ENCODE measurements at regions of chr6 and their contacts with region 1.

Region 1: DNA sequence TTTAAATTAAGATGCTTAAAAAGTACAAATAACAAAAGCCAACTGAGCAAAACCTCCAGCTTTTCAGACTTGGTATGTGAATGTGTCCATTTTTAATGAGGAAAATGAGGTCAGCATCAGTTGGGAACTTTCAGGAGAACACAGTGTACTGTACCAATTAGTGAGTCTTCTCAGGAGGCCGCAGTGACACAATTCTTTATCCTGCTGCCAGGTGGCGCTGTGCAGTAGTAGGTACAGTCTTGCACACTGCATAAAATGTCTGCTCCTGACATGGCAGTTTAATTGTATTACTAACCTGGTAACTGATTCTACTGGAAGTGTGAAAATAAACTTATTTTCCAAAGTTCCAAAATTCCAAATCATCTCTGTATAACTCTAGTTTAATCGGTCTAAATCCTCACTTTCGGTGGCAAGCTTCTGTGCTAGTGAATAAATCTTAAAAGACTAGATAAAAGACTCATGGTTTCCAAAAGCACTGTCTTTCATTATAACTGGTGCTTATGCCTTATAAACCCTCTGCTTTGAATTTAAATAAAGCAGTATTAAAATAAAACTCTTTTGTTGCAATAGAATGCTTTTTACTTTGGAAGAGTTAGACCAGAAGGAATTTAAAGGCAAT is 214.8 kb upstream of the MMS22L start:
- H3K4me3 Mint-ChIP-seq: no peak overlapping the region
- H3K27ac Mint-ChIP-seq: no peak overlapping the region
- H3K4me1 Mint-ChIP-seq: no peaks in the 10 kb centered on the region
- H3K27me3 Mint-ChIP-seq: peaks cover 5% of the 10 kb centered on the region

Region 2: GRCh38 chr6:97195117-97195516 is 302.7 kb before region 1 on chr6:
- intact Hi-C with region 1: loop called (anchors 10 kb)
- H3K4me3 Mint-ChIP-seq: no peak overlapping the region
- H3K27ac Mint-ChIP-seq: no peak overlapping the region
- H3K4me1 Mint-ChIP-seq: no peaks in the 10 kb centered on the region
- H3K27me3 Mint-ChIP-seq: no peaks in the 10 kb centered on the region

Region 3: GRCh38 chr6:97557355-97557754 is 59.5 kb after region 1 on chr6:
- intact Hi-C with region 1: no loop called
- H3K4me3 Mint-ChIP-seq: no peak overlapping the region
- H3K27ac Mint-ChIP-seq: no peak overlapping the region
- H3K4me1 Mint-ChIP-seq: no peaks in the 10 kb centered on the region
- H3K27me3 Mint-ChIP-seq: no peaks in the 10 kb centered on the region

Region 4: GRCh38 chr6:97572943-97573342 is 75.1 kb after region 1 on chr6:
- intact Hi-C with region 1: no loop called
- H3K4me3 Mint-ChIP-seq: no peak overlapping the region
- H3K27ac Mint-ChIP-seq: no peak overlapping the region
- H3K4me1 Mint-ChIP-seq: no peaks in the 10 kb centered on the region
- H3K27me3 Mint-ChIP-seq: no peaks in the 10 kb centered on the region

Region 5: DNA sequence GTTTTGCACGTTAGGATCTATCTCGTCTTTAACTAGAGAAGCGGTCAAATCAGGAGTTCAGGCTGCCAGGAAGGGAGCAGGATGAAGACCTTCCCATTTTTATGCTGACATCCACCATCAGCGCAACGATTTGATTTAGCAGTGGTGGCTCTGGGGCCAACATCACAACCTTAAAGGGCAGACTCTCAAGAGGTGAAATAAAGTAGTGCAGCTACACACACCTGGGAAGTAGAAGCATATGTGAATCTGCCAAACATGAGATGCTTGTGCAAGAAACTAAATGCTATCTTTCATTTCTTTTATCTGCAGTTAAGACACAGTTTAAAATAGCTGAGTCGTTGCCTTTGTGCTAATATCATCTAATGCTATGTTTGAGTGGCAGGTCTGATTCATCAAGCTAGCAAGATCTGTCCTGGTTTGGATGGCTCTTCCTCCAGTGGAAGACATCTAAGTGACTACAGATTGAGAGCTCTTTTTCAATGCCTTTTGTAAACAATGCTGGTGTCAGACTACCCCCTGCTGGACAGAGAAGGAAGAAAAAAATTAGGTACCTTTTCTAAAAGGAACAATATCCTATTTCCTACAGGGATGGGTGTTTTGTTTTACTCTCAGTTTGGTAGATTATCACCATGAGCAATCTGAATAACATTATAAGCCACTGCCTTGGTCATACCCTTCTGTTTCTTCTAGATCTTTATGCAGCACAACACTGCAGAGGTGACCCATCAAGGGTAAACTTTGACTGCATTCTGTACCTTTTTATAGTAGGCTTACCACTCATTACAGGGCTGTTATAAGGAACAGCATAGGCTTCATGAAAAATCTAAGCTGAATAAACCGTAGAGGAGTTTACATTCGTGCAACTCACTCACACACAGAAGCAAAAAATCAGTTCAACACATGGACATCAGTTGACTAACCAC is 1621.5 kb after region 1 on chr6:
- intact Hi-C with region 1: loop called (anchors 1 kb)
- H3K4me3 Mint-ChIP-seq: no peak overlapping the region
- H3K27ac Mint-ChIP-seq: no peak overlapping the region
- H3K4me1 Mint-ChIP-seq: no peaks in the 10 kb centered on the region
- H3K27me3 Mint-ChIP-seq: peaks cover 4% of the 10 kb centered on the region

Measured in dendritic cell treated with granulocyte-macrophage colony-stimulating factor and Interleukin-4, amounts not matched to agents 40 ng/mL and 50 ng/mL, for 4 days (primary cell).